ENCODE measurements at regions of chr11 and their contacts with region 1.

Region 1: GRCh38 chr11:71928737-71929452 is at the start of gene RNF121:
- DNase-seq: peak; percentile 92
- ATAC-seq: peak; percentile 87
- H3K4me3 ChIP-seq: peak within 1 kb of the TSS; percentile 86
- H3K27ac ChIP-seq: peak within 1 kb of the TSS; percentile 98
- H3K4me1 ChIP-seq: peaks cover 22% of the 10 kb centered on the region
- H3K27me3 ChIP-seq: no peaks in the 10 kb centered on the region
- CTCF ChIP-seq: no peak
- EP300 ChIP-seq: no peak
- POLR2A ChIP-seq: peak; percentile 96
- RAD21 ChIP-seq: no peak
- polyA plus RNA-seq, gene RNF121: 8.6 to 19.0 TPM

Region 2: DNA sequence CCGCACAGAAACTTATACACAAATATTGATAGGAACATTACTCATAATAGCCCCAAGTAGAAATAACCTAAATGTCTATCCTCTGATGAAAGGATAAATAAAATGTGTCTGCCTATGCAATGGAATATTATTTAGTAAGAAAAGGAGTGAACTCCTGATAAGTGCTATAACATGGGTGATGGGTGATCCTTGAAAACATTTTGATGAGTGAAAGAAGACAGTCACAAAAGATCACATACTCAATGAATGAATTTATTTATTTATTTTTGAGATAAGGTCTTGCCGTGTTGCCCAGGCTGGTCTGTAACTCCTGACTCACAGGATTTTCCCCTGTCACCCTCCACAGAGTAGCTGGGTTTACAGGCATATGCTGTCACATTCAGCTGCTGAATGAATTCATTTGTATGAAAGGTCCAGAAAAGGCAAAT is 17.3 kb after region 1 on chr11:
- CTCF ChIA-PET with region 1: interaction called, 38 read pairs
- POLR2A ChIA-PET with region 1: interaction called, 25 read pairs
- RAD21 ChIA-PET with region 1: interaction called, 17 read pairs
- SMC1A ChIA-PET with region 1: interaction called, 50 read pairs
- in situ Hi-C with region 1: no loop called
- intact Hi-C with region 1: no loop called
- DNase-seq: no peak
- ATAC-seq: peak; percentile 80
- H3K4me3 ChIP-seq: no peak overlapping the region
- H3K27ac ChIP-seq: no peak overlapping the region
- H3K4me1 ChIP-seq: peaks cover 13% of the 10 kb centered on the region; the same call in 1 of the 2 replicates
- H3K27me3 ChIP-seq: no peaks in the 10 kb centered on the region
- CTCF ChIP-seq: no peak
- EP300 ChIP-seq: no peak
- POLR2A ChIP-seq: no peak
- RAD21 ChIP-seq: no peak

Region 3: DNA sequence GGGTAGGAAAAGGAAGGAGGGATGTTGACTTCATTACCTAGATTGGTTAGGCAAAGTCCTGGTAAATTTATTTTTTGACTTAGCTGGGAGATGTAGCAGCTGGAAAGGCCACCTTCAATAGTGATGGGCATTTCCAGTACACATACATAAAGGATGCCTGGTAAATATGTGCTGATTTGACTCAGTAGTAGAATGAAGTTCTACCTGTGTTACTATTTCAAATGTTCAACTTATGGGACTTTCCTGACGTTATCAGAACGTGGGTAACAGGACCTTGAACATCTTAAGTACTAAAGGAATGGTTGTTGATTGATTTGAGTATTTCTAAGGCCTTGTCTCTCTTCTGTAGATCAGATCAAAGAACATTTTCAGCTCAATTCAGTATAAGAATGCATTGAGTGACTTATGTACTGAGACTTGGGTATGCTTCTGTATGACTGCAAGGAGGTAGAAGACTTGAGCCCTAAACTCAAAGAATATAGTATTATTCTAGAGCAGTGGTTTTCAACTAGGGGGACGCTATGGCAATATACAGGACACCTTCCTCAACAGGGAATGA is 27.1 kb after region 1 on chr11:
- CTCF ChIA-PET with region 1: interaction called, 4 read pairs
- POLR2A ChIA-PET with region 1: interaction called, 12 read pairs
- RAD21 ChIA-PET with region 1: interaction called, 5 read pairs
- SMC1A ChIA-PET with region 1: interaction called, 17 read pairs
- in situ Hi-C with region 1: no loop called
- intact Hi-C with region 1: no loop called
- DNase-seq: no peak
- ATAC-seq: peak; percentile 42
- H3K4me3 ChIP-seq: no peak overlapping the region
- H3K27ac ChIP-seq: no peak overlapping the region
- H3K4me1 ChIP-seq: no peaks in the 10 kb centered on the region; the same call in 1 of the 2 replicates
- H3K27me3 ChIP-seq: no peaks in the 10 kb centered on the region
- CTCF ChIP-seq: no peak
- EP300 ChIP-seq: no peak
- POLR2A ChIP-seq: no peak
- RAD21 ChIP-seq: no peak

Region 4: DNA sequence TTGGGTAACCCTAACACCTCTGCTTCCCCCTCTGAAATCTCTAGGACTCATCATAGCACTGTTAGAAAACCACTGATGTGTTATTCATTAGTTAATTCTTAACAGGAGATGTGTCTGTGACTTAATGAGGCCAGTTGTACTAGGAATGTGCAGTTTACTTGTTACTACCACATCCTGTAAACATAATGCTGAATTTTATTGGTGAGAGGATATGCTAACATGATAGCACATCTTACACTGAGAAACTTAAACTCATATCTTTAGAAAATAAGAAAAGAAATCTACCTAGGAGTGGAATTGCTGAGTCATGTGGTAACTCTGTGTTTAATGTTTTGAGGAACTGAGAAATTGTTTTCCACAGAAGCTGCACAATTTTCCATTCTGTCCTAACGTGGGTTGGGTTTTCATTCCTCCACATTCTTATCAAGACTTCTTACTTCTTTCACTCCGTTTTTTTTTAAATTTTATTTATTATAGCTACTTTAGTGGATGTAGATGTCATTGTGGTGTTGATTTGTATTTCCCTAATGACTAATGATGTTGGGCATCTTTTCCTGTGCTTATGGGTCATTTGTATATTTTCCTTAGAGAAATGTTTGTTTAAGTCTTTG is 33.6 kb after region 1 on chr11:
- CTCF ChIA-PET with region 1: interaction called, 3 read pairs
- POLR2A ChIA-PET with region 1: interaction called, 12 read pairs
- RAD21 ChIA-PET with region 1: interaction called, 5 read pairs
- SMC1A ChIA-PET with region 1: interaction called, 17 read pairs
- in situ Hi-C with region 1: no loop called
- intact Hi-C with region 1: loop called (anchors 2 kb)
- DNase-seq: peak; percentile 53
- ATAC-seq: peak; percentile 96
- H3K4me3 ChIP-seq: peak overlapping the region; percentile 46; the same call in 1 of the 2 replicates
- H3K27ac ChIP-seq: peak overlapping the region; percentile 65
- H3K4me1 ChIP-seq: peaks cover 11% of the 10 kb centered on the region
- H3K27me3 ChIP-seq: no peaks in the 10 kb centered on the region
- CTCF ChIP-seq: no peak
- EP300 ChIP-seq: peak in 1 of 2 experiments; percentile 83; a peak in 1 of 4 replicates
- POLR2A ChIP-seq: no peak
- RAD21 ChIP-seq: no peak

Region 5: GRCh38 chr11:71991494-71991893 is 62.6 kb after region 1 on chr11:
- CTCF ChIA-PET with region 1: interaction called, 8 read pairs
- POLR2A ChIA-PET with region 1: interaction called, 6 read pairs
- RAD21 ChIA-PET with region 1: interaction called, 12 read pairs
- SMC1A ChIA-PET with region 1: interaction called, 8 read pairs
- in situ Hi-C with region 1: no loop called
- intact Hi-C with region 1: loop called (anchors 2 kb)
- DNase-seq: peak; percentile 94
- ATAC-seq: peak; percentile 87
- H3K4me3 ChIP-seq: no peak overlapping the region
- H3K27ac ChIP-seq: peak overlapping the region; percentile 77
- H3K4me1 ChIP-seq: peaks cover 32% of the 10 kb centered on the region
- H3K27me3 ChIP-seq: no peaks in the 10 kb centered on the region
- CTCF ChIP-seq: no peak
- EP300 ChIP-seq: peak; percentile 47 to 92; a peak in 3 of 4 replicates
- POLR2A ChIP-seq: no peak
- RAD21 ChIP-seq: no peak

Region 6: DNA sequence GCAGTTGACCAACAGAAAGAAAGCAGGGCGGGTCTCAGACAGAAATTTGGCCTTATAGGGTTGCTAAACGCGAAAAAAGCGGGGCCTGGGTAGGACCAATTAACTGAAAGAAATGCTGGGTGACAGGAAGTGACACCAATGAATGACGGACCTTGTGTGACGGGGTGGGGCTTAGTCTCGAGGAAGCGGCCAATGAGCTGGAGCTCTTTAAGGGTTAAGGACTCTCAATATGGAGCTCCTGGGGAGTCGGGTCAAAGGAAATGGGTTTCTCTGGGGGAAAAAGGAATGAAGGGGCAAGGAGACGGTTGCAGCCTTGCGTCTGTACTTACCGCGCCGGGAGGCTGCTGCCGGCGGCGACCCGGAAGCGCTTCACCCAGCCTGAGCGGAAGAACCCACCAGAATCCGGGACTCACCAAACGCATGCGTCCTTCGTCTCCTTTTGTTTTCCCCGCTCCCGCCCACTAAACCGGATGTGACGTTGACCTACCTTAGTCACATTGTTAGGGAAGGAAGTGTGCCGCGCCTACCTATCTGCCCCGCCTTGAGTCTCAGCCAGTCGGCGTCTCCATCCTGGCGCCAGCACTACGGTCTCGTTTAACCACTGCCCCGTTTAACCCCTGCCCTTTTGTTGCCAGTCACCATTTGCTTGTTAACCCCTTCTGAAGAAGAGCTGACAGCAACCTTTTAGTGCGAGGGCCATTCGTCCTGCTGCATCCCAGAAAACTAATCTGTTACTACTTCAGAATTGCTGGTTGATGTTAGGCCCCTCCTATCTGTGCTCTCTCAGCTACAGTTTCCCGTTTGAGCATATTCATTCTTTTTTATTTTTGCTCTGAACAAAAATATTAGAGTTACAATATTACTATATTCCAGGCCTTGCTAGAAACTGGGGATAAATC is 183.7 kb after region 1 on chr11 and contains the start of gene ANAPC15:
- CTCF ChIA-PET with region 1: no interaction called
- POLR2A ChIA-PET with region 1: no interaction called
- RAD21 ChIA-PET with region 1: interaction called, 6 read pairs
- SMC1A ChIA-PET with region 1: interaction called, 6 read pairs
- in situ Hi-C with region 1: no loop called
- intact Hi-C with region 1: loop called (anchors 1 kb)
- DNase-seq: peak; percentile 99
- ATAC-seq: peak; percentile 96
- H3K4me3 ChIP-seq: peak within 1 kb of the TSS; percentile 69
- H3K27ac ChIP-seq: peak within 1 kb of the TSS; percentile 99
- H3K4me1 ChIP-seq: peaks cover 7% of the 10 kb centered on the region
- H3K27me3 ChIP-seq: no peaks in the 10 kb centered on the region
- CTCF ChIP-seq: no peak
- EP300 ChIP-seq: no peak
- POLR2A ChIP-seq: peak; percentile 99
- RAD21 ChIP-seq: no peak
- polyA plus RNA-seq, gene ANAPC15: 230 to 372 TPM